Activated CD4-positive, alpha-beta T cell treated with anti-CD3 and anti-CD28 coated beads for 36 hours (primary cell): ENCODE measurements at regions of chr5 and their contacts with region 1.

Region 1: DNA sequence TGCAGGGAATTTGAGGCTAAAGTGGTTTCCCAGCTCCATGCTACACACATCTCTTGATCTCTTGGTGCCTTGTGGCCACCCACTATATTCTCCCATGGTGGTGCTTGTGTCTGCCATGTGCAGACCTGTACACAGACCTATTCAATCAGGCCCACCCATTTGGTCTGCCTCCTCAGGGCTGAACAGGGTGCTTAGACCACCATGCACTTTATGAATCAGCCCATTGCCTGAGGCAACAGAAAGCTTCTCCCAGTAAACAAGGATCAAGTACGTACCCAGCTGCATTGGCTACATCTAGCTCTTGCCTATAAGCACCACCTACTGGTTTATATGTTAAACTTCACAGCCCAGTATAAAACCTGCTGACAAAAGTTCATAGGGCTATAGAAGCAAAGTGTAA is 664.3 kb upstream of the EDIL3 start:
- DNase-seq: no peak
- ATAC-seq: no peak
- H3K4me3 Mint-ChIP-seq: no peak overlapping the region
- H3K27ac Mint-ChIP-seq: no peak overlapping the region
- H3K4me1 Mint-ChIP-seq: no peaks in the 10 kb centered on the region
- H3K27me3 Mint-ChIP-seq: no peaks in the 10 kb centered on the region

Region 2: DNA sequence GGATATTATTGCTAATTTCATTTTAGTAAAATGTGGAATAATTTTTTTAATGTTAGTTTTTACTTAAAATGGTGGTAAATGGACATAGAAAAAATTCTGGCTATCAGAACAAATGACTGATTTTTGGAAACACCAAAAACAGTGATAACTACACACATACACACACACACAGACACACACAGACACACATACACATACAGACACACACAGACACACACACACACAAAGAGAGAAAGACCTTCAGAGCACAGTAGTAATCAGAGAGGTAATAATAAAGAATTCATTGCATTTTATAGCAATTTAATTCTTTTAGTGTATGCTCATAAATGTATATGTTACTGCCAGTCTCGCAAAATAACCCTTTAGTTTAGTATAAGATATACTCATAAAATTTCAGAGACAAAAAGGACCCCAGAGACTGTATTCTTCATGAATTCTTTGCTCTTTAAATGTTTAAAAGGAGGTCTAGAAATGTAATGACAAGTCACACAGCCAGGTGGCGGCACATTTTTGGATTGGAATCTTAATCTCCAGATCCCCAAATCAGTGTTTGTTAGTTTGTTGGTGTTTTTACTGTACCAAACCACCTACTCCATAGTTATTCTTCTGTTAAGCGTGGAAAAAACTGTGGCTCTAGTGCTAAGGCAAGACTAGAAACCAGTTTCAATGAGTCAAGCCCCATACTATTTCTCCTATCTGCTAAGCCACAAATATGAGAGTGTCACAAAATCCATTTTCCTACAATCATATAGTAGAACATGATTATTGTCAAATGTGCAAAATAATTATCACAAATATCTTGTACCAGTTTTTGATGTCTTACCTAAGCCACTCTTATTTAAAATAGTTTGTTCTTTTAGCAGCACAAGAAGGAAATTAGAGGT is 774.2 kb before region 1 on chr5:
- CTCF ChIA-PET with region 1: no interaction called
- POLR2A ChIA-PET with region 1: no interaction called
- intact Hi-C with region 1: loop called in 1 of 2 experiments (anchors 10 kb)
- DNase-seq: peak; percentile 34
- ATAC-seq: no peak
- H3K4me3 Mint-ChIP-seq: no peak overlapping the region
- H3K27ac Mint-ChIP-seq: no peak overlapping the region
- H3K4me1 Mint-ChIP-seq: no peaks in the 10 kb centered on the region
- H3K27me3 Mint-ChIP-seq: no peaks in the 10 kb centered on the region

Region 3: DNA sequence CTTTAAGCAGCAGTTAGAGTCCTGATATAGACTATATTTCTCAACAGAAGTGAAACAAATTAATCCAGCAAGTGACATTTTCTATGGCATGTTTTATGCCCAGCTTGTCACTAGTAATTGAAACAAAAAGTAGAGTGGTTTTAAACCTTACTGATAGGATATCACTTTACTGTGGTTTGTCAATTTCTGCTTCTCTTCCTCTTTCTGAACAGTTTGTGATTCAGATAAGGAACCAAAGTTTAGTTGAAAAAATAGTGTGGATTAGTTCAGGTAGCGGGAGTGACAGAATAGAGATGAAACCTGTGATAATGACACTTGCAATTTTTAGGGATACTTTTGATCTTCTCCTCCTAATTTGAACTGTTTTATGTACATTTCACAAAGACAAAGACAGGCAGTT is 178.7 kb before region 1 on chr5:
- CTCF ChIA-PET with region 1: no interaction called
- POLR2A ChIA-PET with region 1: no interaction called
- intact Hi-C with region 1: no loop called
- DNase-seq: no peak
- ATAC-seq: no peak
- H3K4me3 Mint-ChIP-seq: no peak overlapping the region
- H3K27ac Mint-ChIP-seq: no peak overlapping the region
- H3K4me1 Mint-ChIP-seq: no peaks in the 10 kb centered on the region
- H3K27me3 Mint-ChIP-seq: no peaks in the 10 kb centered on the region